GM10248 (cell line): ENCODE measurements at regions of chr19 and their contacts with region 1.

Region 1: DNA sequence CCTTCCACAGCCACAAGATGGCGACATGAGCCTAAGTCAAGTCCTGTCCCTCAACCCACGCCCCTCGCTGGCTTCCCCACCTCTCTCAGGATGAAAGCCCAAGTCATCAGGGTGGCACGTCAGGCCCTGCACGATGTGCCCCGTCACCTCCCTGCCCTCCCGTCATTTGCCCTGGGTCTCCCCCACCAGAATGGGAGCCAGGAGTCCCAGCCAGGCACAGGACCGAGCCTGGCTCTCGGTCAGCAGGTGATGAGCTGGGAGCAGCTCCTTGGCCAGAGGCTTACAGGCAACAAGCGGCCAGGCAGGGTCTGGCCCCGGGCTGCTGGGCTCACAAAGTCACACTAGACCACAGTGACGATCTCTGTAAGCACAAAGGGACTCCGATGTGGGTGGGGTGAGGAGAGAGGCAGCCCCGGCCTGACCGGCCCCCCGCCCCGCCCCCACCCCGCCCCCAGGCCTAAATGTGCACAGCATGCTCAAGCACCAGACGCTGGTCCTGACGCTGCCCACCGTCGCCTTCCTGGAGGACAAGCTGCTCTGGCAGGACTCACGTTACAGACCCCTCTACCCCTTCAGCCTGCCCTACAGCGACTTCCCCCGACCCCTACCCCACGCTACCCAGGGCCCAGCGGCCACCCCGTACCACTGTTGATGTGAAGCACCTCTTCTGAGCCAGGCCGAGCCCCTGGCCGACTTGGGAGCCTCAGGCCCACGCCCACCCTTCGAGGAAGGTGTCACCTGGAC is 7.3 kb downstream of the MRPL4 start:
- DNase-seq: peak; percentile 81
- CTCF ChIP-seq: peak; percentile 75

Region 2: DNA sequence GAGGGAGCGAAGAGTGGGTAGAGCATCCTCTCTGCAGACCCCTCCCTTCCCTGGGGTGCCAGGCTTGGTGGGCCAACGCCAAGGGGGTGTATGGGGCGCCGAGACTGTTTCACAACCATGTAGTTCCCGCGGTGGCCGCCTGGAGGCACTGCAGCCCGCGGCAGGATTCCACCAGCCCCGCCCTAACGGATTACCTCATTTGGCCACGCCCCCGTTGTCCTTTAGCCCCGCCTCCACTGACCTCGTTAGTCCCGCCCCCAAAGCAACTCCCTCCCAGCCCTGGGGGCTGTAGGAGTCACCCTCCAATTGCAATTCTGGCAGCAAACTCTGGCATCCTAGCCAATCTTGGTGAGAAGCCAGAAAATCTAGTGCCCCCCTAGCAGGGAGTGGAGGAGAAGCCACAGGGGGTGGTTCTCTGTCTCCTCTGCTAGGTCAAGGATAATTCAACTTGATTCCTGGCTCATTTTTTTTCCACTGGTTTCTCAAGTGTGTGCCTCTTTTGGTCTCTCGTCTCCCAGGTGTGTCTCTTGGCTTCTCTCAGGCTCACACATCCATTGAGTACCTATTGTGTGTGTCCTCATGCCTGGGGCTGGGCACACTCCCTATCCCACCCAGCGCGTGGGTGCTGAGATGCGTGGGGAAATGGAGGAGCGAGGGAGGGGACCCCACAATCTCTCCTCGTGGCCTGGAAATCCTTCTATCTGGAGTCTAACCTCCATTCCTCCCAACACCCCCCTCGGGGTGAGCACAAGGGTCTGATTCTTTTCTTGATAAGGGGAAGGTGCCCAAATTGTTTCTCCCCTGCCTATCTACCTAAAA is 325.0 kb before region 1 on chr19:
- CTCF ChIA-PET with region 1: interaction called, 33 read pairs
- POLR2A ChIA-PET with region 1: no interaction called
- DNase-seq: peak; percentile 87
- CTCF ChIP-seq: peak; percentile 90

Region 3: GRCh38 chr19:10245189-10245939 is 14.0 kb before region 1 on chr19:
- CTCF ChIA-PET with region 1: interaction called, 34 read pairs
- POLR2A ChIA-PET with region 1: interaction called, 3 read pairs
- DNase-seq: peak; percentile 53
- CTCF ChIP-seq: no peak

Region 4: GRCh38 chr19:10279737-10280442 is 20.6 kb after region 1 on chr19:
- CTCF ChIA-PET with region 1: interaction called, 27 read pairs
- POLR2A ChIA-PET with region 1: interaction called, 4 read pairs
- DNase-seq: no peak
- CTCF ChIP-seq: no peak

Region 5: DNA sequence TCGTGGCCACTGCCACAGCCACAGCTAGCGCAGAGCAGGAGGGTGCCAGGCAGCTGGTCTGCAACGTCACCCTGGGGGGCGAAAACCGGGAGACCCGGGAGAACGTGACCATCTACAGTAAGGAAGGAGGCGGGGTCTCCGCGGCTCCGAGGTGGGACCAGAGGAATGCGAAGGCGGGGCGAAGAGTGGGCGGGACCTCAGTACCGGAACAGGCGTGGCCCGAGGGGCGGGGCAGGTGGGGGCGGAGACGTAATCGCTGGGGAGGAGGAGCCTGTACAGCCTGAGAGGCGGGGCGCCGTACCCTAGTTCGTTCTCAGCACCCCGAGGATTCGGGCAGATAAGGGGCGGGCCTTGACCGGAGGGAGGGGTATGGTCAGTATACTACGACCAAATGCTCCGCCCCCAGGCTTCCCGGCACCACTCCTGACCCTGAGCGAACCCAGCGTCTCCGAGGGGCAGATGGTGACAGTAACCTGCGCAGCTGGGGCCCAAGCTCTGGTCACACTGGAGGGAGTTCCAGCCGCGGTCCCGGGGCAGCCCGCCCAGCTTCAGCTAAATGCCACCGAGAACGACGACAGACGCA is 33.0 kb after region 1 on chr19:
- CTCF ChIA-PET with region 1: interaction called, 25 read pairs
- POLR2A ChIA-PET with region 1: interaction called, 8 read pairs
- DNase-seq: peak; percentile 91
- CTCF ChIP-seq: no peak

Region 6: GRCh38 chr19:10416380-10417257 is 157.3 kb after region 1 on chr19:
- CTCF ChIA-PET with region 1: interaction called, 15 read pairs
- POLR2A ChIA-PET with region 1: interaction called, 4 read pairs
- DNase-seq: peak; percentile 89
- CTCF ChIP-seq: peak; percentile 74

Region 7: GRCh38 chr19:10431943-10432735 is 172.8 kb after region 1 on chr19:
- CTCF ChIA-PET with region 1: interaction called, 11 read pairs
- POLR2A ChIA-PET with region 1: no interaction called
- DNase-seq: peak; percentile 83
- CTCF ChIP-seq: no peak